ENCODE measurements at regions of chr12 and their contacts with region 1.

Region 1: DNA sequence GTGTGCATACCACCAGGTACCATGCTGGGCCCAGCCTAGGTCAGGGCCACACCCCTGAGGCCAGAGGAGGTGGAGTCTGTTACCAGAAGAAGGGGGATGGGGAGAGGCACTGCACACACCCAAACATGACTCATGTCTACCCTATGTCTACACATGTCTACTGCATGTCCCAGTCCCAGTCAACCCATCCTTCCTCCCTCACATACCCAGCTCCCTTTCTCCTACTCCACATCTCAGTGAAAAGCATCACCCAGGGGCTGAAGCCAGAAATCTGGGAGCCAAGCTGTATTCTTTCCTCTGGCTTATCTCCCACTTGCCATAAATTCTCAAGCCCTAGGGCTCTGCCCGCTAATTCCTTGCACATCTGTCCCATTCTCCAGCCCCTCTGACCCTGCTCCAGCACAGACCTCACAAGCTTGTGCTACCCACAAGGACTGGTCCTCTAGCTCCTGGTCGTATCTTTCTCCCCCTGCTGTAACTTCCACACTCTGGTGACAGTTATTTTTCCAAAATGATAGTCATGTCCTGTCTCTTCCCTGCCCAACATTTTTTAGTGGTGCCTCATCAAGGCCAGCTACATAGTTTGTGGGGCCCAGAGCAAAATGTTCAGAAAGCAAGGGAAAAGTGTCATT is 18.0 kb upstream of the APPL2 start:
- DNase-seq: no peak
- H3K4me3 ChIP-seq: no peak overlapping the region
- H3K27ac ChIP-seq: peak overlapping the region; percentile 21 to 50
- H3K4me1 ChIP-seq: no peaks in the 10 kb centered on the region
- H3K27me3 ChIP-seq: no peaks in the 10 kb centered on the region
- CTCF ChIP-seq: no peak
- POLR2A ChIP-seq: no peak

Region 2: GRCh38 chr12:104858611-104859543 is 395.1 kb before region 1 on chr12:
- intact Hi-C with region 1: no loop called
- DNase-seq: no peak
- H3K4me3 ChIP-seq: no peak overlapping the region
- H3K27ac ChIP-seq: no peak overlapping the region
- H3K4me1 ChIP-seq: no peaks in the 10 kb centered on the region
- H3K27me3 ChIP-seq: no peaks in the 10 kb centered on the region
- CTCF ChIP-seq: no peak
- POLR2A ChIP-seq: no peak

Region 3: DNA sequence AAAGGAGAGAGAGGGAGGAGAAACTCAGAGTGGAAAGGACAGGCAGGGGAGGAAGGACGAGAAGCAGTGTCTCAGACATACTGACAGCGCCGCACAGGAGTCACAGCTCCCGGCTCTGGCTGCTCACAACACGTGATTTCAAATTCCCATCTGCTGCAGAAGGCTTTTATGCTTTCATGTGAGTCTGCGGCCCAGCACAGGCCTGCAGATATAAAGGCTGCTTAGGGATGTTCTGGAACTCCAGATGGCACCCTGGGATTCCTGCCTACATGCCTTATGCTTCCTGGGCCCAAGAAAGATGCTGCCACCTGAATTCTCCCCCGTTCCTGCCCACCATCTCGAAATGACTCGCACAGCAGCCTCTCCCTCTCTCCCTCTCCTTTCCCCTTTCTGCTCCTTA is 795.1 kb after region 1 on chr12:
- intact Hi-C with region 1: no loop called
- DNase-seq: no peak
- H3K4me3 ChIP-seq: no peak overlapping the region
- H3K27ac ChIP-seq: no peak overlapping the region
- H3K4me1 ChIP-seq: no peaks in the 10 kb centered on the region
- H3K27me3 ChIP-seq: no peaks in the 10 kb centered on the region
- CTCF ChIP-seq: no peak
- POLR2A ChIP-seq: no peak

Region 4: DNA sequence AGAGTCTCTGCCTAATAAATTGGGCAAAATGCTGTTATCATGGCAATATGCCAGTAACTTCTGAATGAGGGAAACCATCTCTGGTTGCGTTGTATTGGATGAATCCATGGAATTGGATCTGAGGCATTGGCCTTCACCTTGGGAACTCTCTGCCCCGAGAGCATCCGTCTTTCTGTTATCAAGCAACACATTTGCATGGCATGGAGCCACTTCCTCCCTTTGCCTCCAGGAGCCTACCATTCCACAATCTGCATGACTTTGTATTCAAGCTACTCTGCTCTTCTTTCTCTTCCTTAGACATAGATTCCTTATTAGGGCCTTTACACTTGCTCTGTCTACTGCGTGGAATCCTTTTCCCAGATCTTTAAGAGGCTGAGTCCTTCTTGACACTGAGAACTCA is 1577.7 kb after region 1 on chr12:
- intact Hi-C with region 1: loop called (anchors 10 kb)
- DNase-seq: no peak
- H3K4me3 ChIP-seq: no peak overlapping the region
- H3K27ac ChIP-seq: no peak overlapping the region
- H3K4me1 ChIP-seq: no peaks in the 10 kb centered on the region
- H3K27me3 ChIP-seq: no peaks in the 10 kb centered on the region
- CTCF ChIP-seq: no peak
- POLR2A ChIP-seq: no peak

Measured in breast epithelium (tissue), 4 donors.